Activated T-helper 2 cell treated with anti-CD3 and anti-CD28 coated beads, Interferon-gamma antibody, Interleukin-2, Interleukin-4, amounts not matched to agents 10 μg/mL and 5 μg/mL and 100 μg/mL, durations not matched to agents 14 hours and 24 hours and 36 hours (primary cell): ENCODE measurements at regions of chr18 and their contacts with region 1.

Region 1: GRCh38 chr18:2655178-2655953 is at the start of gene SMCHD1:
- DNase-seq: peak; percentile 86
- H3K4me3 Mint-ChIP-seq: peak within 1 kb of the TSS; percentile 98
- H3K27ac Mint-ChIP-seq: peak within 1 kb of the TSS; percentile 95
- H3K4me1 Mint-ChIP-seq: peaks cover 33% of the 10 kb centered on the region
- H3K27me3 Mint-ChIP-seq: peaks cover 5% of the 10 kb centered on the region
- total RNA-seq, gene SMCHD1: 100 and 101 TPM in 2 replicates

Region 2: GRCh38 chr18:2508678-2509077 is 146.7 kb before region 1 on chr18:
- intact Hi-C with region 1: no loop called
- DNase-seq: no peak
- H3K4me3 Mint-ChIP-seq: no peak overlapping the region
- H3K27ac Mint-ChIP-seq: no peak overlapping the region
- H3K4me1 Mint-ChIP-seq: no peaks in the 10 kb centered on the region
- H3K27me3 Mint-ChIP-seq: peaks cover 5% of the 10 kb centered on the region

Region 3: GRCh38 chr18:2571200-2572143 is 83.9 kb before region 1 on chr18 and contains the starts of genes METTL4 and NDC80:
- intact Hi-C with region 1: loop called (anchors 1 kb)
- DNase-seq: peak; percentile 82
- H3K4me3 Mint-ChIP-seq: peak within 1 kb of the TSS; percentile 99
- H3K27ac Mint-ChIP-seq: peak within 1 kb of the TSS; percentile 98
- H3K4me1 Mint-ChIP-seq: peaks cover 52% of the 10 kb centered on the region
- H3K27me3 Mint-ChIP-seq: no peaks in the 10 kb centered on the region
- total RNA-seq, gene METTL4: 17.8 and 18.3 TPM in 2 replicates
- total RNA-seq, gene NDC80: 41.5 and 43.0 TPM in 2 replicates

Region 4: GRCh38 chr18:2606335-2606734 is 49.0 kb before region 1 on chr18:
- intact Hi-C with region 1: loop called (anchors 2 kb)
- DNase-seq: no peak
- H3K4me3 Mint-ChIP-seq: peak overlapping the region; percentile 62
- H3K27ac Mint-ChIP-seq: peak overlapping the region; percentile 76
- H3K4me1 Mint-ChIP-seq: peaks cover 56% of the 10 kb centered on the region
- H3K27me3 Mint-ChIP-seq: no peaks in the 10 kb centered on the region

Region 5: GRCh38 chr18:2680216-2680792 is 24.9 kb after region 1 on chr18:
- intact Hi-C with region 1: loop called (anchors 2 kb)
- DNase-seq: no peak
- H3K4me3 Mint-ChIP-seq: no peak overlapping the region
- H3K27ac Mint-ChIP-seq: peak overlapping the region; percentile 34
- H3K4me1 Mint-ChIP-seq: peaks cover 43% of the 10 kb centered on the region
- H3K27me3 Mint-ChIP-seq: no peaks in the 10 kb centered on the region